ENCODE measurements at regions of chr1 and their contacts with region 1.

Region 1: DNA sequence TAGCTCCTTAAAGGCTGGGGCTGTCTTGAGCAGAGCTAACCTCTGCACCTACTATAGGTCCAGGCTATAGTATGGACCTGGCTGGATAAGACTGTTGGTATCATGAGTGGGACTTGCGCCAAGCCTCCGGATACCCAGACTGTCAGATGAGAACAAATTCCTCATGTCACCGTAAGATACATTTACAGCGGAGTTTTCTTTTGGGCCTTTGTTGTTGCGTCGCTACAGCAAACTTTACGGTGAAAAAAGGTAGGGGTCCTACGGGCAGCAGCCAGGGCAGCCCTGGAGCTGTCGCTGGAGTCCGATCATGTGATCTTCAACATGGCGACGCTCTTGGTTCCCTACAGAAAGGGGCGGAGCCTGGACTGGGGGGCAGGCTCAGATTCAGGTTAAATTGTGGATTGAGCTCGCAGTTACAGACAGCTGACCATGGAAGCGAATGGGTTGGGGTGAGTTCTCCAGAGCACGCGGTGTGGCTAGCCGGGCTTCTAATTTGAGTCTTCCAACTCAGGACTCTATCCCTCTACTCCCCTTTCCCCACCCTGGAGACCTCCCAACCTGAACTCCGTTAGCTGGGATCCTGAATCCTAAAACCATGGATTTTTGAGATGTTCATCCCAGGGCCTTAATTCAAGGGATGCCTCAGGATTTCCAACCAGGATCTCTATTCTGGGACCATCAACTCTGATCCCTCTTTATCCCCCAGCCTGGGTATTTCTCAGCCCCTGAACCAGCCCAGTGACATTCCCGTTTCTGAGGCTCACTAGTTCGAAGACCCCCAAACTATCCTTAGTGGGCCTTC is at the start of gene UROD:
- DNase-seq: peak; percentile 91 to 96 (median 92)
- ATAC-seq: peak; percentile 91 to 97 (median 95)
- H3K4me3 ChIP-seq: peak within 1 kb of the TSS; percentile 78 to 100 (median 93)
- H3K27ac ChIP-seq: peak within 1 kb of the TSS; percentile 66 to 90 (median 84)
- H3K4me1 ChIP-seq: peaks cover 2 to 53% (median 34%) of the 10 kb centered on the region in 12 donors
- H3K27me3 ChIP-seq: no peaks in the 10 kb centered on the region
- CTCF ChIP-seq: peak in 1 of 12 donors; percentile 3
- POLR2A ChIP-seq: peak in 1 of 2 donors; percentile 50
- total RNA-seq, gene UROD: 58.2 to 95.8 (median 78.4) TPM

Region 2: GRCh38 chr1:43688594-43689000 is 1323.4 kb before region 1 on chr1:
- intact Hi-C with region 1: no loop called
- DNase-seq: peak in 1 of 5 donors; percentile 37
- ATAC-seq: peak in 3 of 4 donors; percentile 40 to 79 (median 72)
- H3K4me3 ChIP-seq: no peak overlapping the region
- H3K27ac ChIP-seq: no peak overlapping the region
- H3K4me1 ChIP-seq: peaks cover 0 to 14% (median 0%) of the 10 kb centered on the region in 12 donors
- H3K27me3 ChIP-seq: no peaks in the 10 kb centered on the region
- CTCF ChIP-seq: no peak
- POLR2A ChIP-seq: no peak

Region 3: GRCh38 chr1:44012941-44013609 is 999.0 kb before region 1 on chr1:
- intact Hi-C with region 1: no loop called
- DNase-seq: no peak
- ATAC-seq: no peak
- H3K4me3 ChIP-seq: no peak overlapping the region
- H3K27ac ChIP-seq: no peak overlapping the region
- H3K4me1 ChIP-seq: peaks cover 0 to 20% (median 0%) of the 10 kb centered on the region in 12 donors
- H3K27me3 ChIP-seq: no peaks in the 10 kb centered on the region
- CTCF ChIP-seq: no peak
- POLR2A ChIP-seq: no peak

Region 4: DNA sequence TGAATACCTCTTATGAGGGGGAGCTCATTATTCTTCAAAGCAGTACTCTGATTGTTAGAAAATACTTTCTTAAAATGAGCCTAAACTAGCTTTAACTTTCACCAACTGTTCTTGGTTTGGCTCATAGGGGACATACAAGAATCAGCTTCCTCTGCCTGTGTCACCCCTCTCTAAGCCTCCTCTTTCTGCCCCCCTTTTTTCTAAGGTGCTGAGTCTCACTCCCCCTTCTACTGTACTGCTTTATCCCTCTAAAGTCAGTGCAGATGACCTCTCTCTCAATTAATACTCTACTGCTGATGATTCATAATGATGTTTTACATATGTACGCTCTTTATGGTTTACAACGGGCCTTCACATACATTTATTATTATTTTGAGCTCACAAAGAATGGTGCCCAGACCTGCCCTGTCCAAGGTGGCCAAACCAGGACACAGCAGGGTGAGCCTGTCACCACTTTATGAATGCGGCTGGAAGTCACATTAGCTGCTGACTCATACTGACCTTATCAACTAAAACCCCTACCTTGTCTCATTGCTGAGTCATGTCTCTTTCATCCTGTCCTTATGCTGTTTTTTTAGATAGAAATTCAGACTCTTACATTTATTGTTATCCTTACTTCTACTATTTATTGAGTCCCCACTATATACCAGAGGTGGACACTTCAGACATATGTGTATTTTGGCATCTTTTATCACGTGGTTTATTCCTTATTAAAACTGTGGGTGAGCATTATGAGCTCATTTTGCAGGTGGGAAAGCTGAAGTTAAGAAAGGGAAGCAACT is 480.1 kb before region 1 on chr1:
- intact Hi-C with region 1: no loop called
- DNase-seq: no peak
- ATAC-seq: peak in 3 of 4 donors; percentile 65 to 79 (median 68)
- H3K4me3 ChIP-seq: no peak overlapping the region
- H3K27ac ChIP-seq: no peak overlapping the region
- H3K4me1 ChIP-seq: no peaks in the 10 kb centered on the region
- H3K27me3 ChIP-seq: peaks cover 0 to 8% (median 0%) of the 10 kb centered on the region in 9 donors
- CTCF ChIP-seq: no peak
- POLR2A ChIP-seq: no peak

Region 5: DNA sequence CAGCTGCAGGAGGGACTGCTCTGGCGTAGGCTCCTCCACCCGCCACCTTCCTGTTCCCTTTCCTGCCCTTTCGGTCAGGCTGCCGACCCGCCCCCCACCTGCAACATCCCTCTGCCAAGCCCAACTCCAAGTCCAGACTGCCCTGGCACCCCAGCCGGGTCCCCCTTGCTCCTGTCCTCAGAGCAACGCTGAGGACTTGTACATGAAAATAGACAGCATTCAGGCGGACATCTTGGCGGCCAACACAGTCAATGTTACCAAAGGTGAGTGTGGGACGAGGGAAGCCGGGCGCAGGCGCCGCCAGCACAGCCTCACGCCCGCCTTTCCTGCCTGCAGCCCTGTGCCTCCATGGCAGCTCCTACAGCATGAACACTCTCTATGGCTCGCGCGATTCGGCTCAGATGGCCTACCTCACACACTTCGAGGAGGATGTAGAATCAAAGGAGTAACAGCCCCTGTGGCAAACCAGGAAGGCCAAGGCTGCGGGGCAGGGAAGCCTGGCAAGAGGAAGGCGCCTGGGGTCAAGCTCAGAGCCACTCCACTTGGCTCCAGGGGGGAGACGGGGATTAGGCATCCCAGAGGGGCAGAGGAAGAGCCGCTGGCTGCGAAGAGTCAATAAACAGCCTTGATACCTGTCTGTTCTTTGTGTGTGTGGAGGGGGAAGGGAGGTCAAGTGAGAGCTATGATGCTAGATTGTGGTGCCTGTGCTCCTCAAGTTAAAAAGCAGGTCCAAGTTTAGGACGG is 286.9 kb before region 1 on chr1:
- intact Hi-C with region 1: loop called in 3 of 10 experiments (anchors 5 to 10 kb)
- DNase-seq: no peak
- ATAC-seq: no peak
- H3K4me3 ChIP-seq: no peak overlapping the region
- H3K27ac ChIP-seq: no peak overlapping the region
- H3K4me1 ChIP-seq: peaks cover 0 to 51% (median under 1%) of the 10 kb centered on the region in 12 donors
- H3K27me3 ChIP-seq: peaks cover 0 to 20% (median 0%) of the 10 kb centered on the region in 9 donors
- CTCF ChIP-seq: no peak
- POLR2A ChIP-seq: no peak

Region 6: DNA sequence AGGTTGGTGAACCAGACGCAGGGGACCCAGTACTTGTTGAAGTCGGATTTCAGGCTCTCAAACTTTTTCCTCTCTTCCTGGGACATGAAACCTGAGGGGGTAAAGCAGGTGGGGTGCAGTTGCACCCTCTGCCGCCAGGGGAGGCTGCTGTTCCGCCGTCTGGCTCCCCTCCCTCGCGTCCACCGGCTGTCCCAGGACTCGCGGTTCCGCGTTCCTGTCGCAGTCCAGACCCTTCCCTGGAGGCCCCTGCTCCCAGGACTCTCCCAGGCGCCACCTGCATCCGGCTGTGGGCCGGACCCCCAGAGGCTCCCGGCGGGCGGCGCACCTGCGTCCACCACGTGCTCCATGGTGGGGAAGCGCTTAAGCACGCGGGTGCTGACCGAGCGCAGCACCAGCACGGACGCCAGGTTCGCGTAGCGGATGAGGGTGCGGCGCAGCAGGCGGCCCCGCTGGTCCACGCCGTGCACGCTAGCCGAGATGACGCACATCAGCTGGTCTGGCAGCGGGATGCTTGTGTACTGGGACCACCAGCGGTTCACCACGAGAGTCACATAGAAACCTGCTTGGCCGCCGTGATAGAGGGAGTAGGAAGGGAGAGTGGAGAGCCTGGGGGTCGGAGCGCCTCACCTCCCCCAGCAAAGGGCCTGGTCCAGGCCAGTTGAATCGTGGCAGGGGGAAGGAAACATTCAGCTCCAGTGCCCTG is 225.7 kb before region 1 on chr1:
- intact Hi-C with region 1: loop called in 6 of 10 experiments (anchors 5 to 10 kb)
- DNase-seq: peak; percentile 64 to 87 (median 68)
- ATAC-seq: peak; percentile 56 to 77 (median 71)
- H3K4me3 ChIP-seq: peak overlapping the region; percentile 2 to 63 (median 52)
- H3K27ac ChIP-seq: peak overlapping the region in 11 of 12 donors; percentile 11 to 68 (median 53)
- H3K4me1 ChIP-seq: peaks cover 0 to 33% (median 25%) of the 10 kb centered on the region in 12 donors
- H3K27me3 ChIP-seq: no peaks in the 10 kb centered on the region
- CTCF ChIP-seq: peak; percentile 93 to 99 (median 98)
- POLR2A ChIP-seq: no peak

Region 7: GRCh38 chr1:44826375-44827196 is 185.5 kb before region 1 on chr1:
- intact Hi-C with region 1: loop called in 2 of 10 experiments (anchors 5 to 10 kb)
- DNase-seq: peak; percentile 78 to 85 (median 81)
- ATAC-seq: peak; percentile 62 to 90 (median 84)
- H3K4me3 ChIP-seq: peak overlapping the region in 7 of 12 donors; percentile 11 to 37 (median 24)
- H3K27ac ChIP-seq: peak overlapping the region in 7 of 12 donors; percentile 19 to 76 (median 67)
- H3K4me1 ChIP-seq: peaks cover 0 to 26% (median 6%) of the 10 kb centered on the region in 12 donors
- H3K27me3 ChIP-seq: no peaks in the 10 kb centered on the region
- CTCF ChIP-seq: no peak
- POLR2A ChIP-seq: no peak

Region 8: DNA sequence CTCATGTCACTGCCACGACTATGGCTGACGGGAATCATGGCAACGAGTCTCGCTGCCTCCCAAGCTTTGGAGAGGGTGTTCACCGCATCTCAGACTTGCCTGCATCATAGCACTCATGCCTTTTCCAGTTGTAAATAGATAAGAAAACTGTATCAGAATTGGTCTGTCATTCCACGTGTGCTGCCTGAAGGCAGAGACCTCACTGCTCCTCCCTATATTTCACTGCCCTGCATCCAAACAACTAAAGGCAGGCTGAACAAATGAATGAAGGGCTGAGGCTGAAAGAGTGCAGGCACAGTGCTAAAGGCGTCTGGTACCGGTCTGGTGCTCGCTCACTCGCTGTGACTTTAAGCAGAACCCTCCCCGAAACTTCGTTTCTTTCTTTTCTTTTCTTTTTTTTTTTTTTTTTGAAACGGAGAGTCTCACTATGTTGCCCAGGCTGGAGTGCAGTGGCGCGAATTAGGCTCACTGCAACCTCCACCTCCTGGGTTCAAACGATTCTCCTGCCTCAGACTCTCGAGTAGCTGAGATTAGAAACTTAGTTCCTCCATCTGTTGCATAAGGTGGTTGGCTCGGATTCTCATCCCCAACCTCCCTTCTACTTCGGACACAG is 26.2 kb before region 1 on chr1:
- intact Hi-C with region 1: loop called in 2 of 10 experiments (anchors 1 to 2 kb)
- DNase-seq: no peak
- ATAC-seq: peak in 2 of 4 donors; percentile 18 to 63
- H3K4me3 ChIP-seq: peak overlapping the region; percentile 54 to 92 (median 74)
- H3K27ac ChIP-seq: peak overlapping the region in 11 of 12 donors; percentile 39 to 84 (median 78)
- H3K4me1 ChIP-seq: peaks cover 2 to 23% (median 10%) of the 10 kb centered on the region in 12 donors
- H3K27me3 ChIP-seq: no peaks in the 10 kb centered on the region
- CTCF ChIP-seq: no peak
- POLR2A ChIP-seq: no peak

Region 9: DNA sequence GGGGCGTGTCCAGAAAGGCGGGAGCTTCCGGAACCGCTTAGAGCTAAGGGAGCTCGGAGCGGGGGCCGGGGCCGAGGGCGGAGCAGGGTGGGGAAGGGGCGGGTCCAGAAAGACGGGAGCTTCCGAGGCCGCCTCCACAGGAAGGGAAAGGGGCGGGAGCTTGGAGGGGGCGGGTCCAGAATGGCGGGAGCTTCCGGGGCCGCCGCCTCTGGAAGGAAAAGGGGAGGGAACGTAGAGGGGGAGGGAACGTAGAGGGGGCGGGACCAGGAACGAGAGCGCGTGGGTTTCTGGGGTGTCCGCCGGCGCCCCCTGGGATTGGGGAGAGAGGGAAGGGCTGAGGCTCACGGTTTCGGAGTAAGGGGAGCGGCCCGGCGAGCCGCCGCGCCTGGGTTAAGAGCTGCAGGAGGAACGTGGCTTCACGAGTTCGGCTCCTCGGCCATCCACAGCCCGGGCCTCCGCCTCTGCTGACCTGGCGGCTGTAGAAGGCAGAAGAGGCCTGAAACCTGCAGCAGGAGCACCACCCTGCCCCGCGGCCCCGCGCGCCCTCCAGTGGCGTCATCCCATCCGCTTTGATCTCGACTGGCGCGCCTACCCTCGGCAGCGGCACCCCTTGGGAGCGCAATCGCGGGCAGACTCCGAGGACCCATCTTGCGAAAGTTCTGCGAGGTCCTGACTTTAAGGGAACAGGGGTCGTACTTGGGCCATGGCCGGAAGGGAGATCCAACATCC is 291.7 kb after region 1 on chr1:
- intact Hi-C with region 1: loop called (anchors 1 to 2 kb)
- DNase-seq: peak; percentile 98 to 99 (median 99)
- ATAC-seq: peak; percentile 98
- H3K4me3 ChIP-seq: peak overlapping the region; percentile 57 to 89 (median 71)
- H3K27ac ChIP-seq: peak overlapping the region; percentile 76 to 98 (median 92)
- H3K4me1 ChIP-seq: peaks cover 0 to 17% (median 14%) of the 10 kb centered on the region in 12 donors
- H3K27me3 ChIP-seq: no peaks in the 10 kb centered on the region
- CTCF ChIP-seq: peak; percentile 48 to 80 (median 66)
- POLR2A ChIP-seq: peak in 1 of 2 donors; percentile 49

Region 10: DNA sequence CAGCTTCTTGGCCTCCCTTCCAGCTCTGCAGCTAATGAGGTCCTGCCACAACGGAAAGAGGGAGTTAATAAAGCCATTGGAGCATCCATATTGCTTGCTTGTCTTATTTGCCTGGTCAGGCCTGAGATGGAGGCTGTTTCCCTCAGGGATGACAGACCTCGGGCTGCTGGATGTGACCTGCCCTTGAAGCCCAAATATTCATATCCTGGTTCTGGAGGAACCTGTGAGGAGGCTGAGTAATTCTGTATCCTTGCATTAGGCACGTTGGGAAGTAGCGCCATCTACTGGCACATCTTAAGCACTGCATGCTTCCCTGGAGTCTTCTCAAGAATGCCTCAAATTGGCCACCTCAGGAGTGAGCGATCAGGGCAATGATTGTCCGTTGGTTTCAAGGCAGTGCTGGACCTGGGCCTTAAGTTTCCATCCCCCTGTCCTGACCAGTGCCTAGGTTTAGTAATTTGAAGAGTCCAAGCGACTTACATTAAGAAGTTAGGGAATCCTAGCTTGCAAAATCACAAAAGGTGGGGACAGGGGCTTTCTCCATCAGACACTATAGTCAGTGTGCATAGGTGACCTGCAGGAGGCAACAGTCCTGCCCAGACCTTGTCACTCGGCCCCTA is 558.0 kb after region 1 on chr1:
- intact Hi-C with region 1: loop called in 3 of 10 experiments (anchors 5 to 10 kb)
- DNase-seq: peak; percentile 41 to 68 (median 65)
- ATAC-seq: peak; percentile 15 to 83 (median 80)
- H3K4me3 ChIP-seq: no peak overlapping the region
- H3K27ac ChIP-seq: no peak overlapping the region
- H3K4me1 ChIP-seq: peaks cover 0 to 12% (median 8%) of the 10 kb centered on the region in 12 donors
- H3K27me3 ChIP-seq: no peaks in the 10 kb centered on the region
- CTCF ChIP-seq: peak; percentile 95 to 100 (median 98)
- POLR2A ChIP-seq: no peak